Mammary epithelial cell (primary cell): ENCODE measurements at regions of chr1 and their contacts with region 1.

Region 1: DNA sequence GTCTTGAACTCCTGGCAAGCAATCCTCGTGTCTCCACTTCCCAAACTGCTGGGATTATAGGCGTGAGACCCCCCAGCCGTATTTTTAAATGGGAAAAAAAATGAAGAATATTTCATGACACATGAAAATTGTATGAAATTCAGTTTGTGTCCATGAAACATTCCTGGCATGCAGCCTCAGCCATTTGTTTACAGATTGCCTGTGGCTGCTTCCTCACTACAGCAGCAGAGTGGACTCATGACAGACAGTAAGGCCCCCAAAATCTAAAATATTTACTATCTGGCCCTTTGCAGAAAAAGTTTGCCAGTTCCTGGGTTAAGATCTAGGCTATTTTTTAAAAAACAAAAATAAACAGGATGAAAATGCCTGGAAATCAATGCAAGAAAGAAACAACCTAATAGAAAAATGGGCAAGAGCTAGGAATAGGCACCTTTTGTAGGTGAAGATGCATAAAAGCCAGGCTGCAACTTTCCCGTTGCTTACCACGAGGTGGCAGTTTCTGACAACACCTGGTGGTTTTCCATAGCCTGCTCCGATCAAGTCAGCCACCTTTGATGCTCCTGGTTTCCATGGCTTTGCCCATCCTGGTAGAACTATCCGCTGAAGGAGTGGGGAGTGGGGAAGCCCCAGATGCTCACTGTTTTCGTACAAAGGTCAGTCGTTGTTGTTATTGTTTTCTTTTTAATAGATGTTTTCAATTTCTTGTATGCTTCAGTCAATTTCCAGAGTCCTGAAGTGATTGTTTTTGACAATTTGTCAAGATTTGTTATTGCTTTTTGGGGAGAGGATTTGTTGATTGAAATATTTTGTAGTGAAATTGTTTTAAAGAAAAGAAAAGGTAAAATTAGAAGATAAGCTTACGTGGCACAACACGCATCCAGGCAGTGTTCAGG is 24.3 kb downstream of the UBE2Q1 start:
- DNase-seq: peak; percentile 44
- H3K4me3 ChIP-seq: no peak overlapping the region
- H3K27ac ChIP-seq: no peak overlapping the region
- H3K4me1 ChIP-seq: no peaks in the 10 kb centered on the region
- H3K27me3 ChIP-seq: no peaks in the 10 kb centered on the region
- CTCF ChIP-seq: peak; percentile 86 to 88

Region 2: GRCh38 chr1:154453574-154454352 is 80.4 kb before region 1 on chr1:
- CTCF ChIA-PET with region 1: no interaction called
- dilution Hi-C with region 1: loop called (anchors 5 kb)
- in situ Hi-C with region 1: no loop called
- intact Hi-C with region 1: no loop called
- DNase-seq: peak; percentile 74
- H3K4me3 ChIP-seq: no peak overlapping the region
- H3K27ac ChIP-seq: no peak overlapping the region
- H3K4me1 ChIP-seq: peaks cover 12% of the 10 kb centered on the region
- H3K27me3 ChIP-seq: no peaks in the 10 kb centered on the region
- CTCF ChIP-seq: no peak

Region 3: GRCh38 chr1:154546264-154547063 is 12.3 kb after region 1 on chr1:
- CTCF ChIA-PET with region 1: interaction called, 15 read pairs
- dilution Hi-C with region 1: no loop called
- in situ Hi-C with region 1: no loop called
- intact Hi-C with region 1: loop called (anchors 1 kb)
- DNase-seq: peak; percentile 44
- H3K4me3 ChIP-seq: no peak overlapping the region
- H3K27ac ChIP-seq: no peak overlapping the region
- H3K4me1 ChIP-seq: peaks cover 13% of the 10 kb centered on the region
- H3K27me3 ChIP-seq: no peaks in the 10 kb centered on the region
- CTCF ChIP-seq: peak; percentile 55 to 81

Region 4: GRCh38 chr1:154589780-154590179 is 55.6 kb after region 1 on chr1:
- CTCF ChIA-PET with region 1: no interaction called
- dilution Hi-C with region 1: loop called (anchors 5 kb)
- in situ Hi-C with region 1: no loop called
- intact Hi-C with region 1: no loop called
- DNase-seq: no peak
- H3K4me3 ChIP-seq: no peak overlapping the region
- H3K27ac ChIP-seq: no peak overlapping the region
- H3K4me1 ChIP-seq: no peaks in the 10 kb centered on the region
- H3K27me3 ChIP-seq: no peaks in the 10 kb centered on the region
- CTCF ChIP-seq: no peak

Region 5: GRCh38 chr1:154878371-154879022 is 344.3 kb after region 1 on chr1:
- CTCF ChIA-PET with region 1: no interaction called
- dilution Hi-C with region 1: no loop called
- in situ Hi-C with region 1: no loop called
- intact Hi-C with region 1: loop called (anchors 1 kb)
- DNase-seq: peak; percentile 36
- H3K4me3 ChIP-seq: no peak overlapping the region
- H3K27ac ChIP-seq: no peak overlapping the region
- H3K4me1 ChIP-seq: no peaks in the 10 kb centered on the region
- H3K27me3 ChIP-seq: no peaks in the 10 kb centered on the region
- CTCF ChIP-seq: peak; percentile 78 to 85

Region 6: GRCh38 chr1:155360051-155360450 is 825.9 kb after region 1 on chr1:
- CTCF ChIA-PET with region 1: no interaction called
- dilution Hi-C with region 1: no loop called
- in situ Hi-C with region 1: no loop called
- intact Hi-C with region 1: no loop called
- DNase-seq: no peak
- H3K4me3 ChIP-seq: no peak overlapping the region
- H3K27ac ChIP-seq: no peak overlapping the region
- H3K4me1 ChIP-seq: no peaks in the 10 kb centered on the region
- H3K27me3 ChIP-seq: no peaks in the 10 kb centered on the region
- CTCF ChIP-seq: no peak